Sciatic nerve (tissue), 2 donors: ENCODE measurements at regions of chr3 and their contacts with region 1.

Region 1: DNA sequence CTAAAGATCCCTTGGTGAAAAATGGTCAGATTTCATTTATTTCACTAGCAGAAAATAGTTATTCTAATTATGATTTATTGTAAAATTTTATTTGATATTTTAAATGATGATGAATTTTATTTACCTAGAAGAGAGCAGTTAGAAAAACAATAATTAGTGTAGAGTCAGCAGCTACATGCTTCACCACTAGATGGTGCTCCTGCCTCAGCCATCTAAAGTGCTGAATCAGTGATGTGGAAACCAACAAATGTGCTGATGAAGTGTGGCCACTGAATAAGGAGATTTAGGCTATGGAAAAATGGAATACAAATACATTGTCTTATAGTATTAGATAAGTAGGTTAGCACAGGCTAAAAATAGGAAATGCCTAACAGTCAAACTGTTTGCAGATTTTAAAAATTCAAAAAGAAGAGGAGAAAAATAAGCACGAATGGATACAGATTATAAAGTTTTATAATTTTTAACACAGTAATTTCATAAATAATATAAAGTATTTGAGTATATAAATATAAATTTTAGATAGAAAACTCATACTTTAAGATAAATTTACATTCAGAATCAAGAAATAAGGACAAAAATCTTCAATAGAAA is 109.8 kb downstream of the PPP2R3A start:
- DNase-seq: peak; percentile 83
- ATAC-seq: peak; percentile 79

Region 2: GRCh38 chr3:137013955-137014688 is 938.8 kb after region 1 on chr3:
- intact Hi-C with region 1: loop called (anchors 5 kb)
- DNase-seq: peak; percentile 96
- ATAC-seq: peak; percentile 97